ENCODE measurements at regions of chr6 and their contacts with region 1.

Region 1: DNA sequence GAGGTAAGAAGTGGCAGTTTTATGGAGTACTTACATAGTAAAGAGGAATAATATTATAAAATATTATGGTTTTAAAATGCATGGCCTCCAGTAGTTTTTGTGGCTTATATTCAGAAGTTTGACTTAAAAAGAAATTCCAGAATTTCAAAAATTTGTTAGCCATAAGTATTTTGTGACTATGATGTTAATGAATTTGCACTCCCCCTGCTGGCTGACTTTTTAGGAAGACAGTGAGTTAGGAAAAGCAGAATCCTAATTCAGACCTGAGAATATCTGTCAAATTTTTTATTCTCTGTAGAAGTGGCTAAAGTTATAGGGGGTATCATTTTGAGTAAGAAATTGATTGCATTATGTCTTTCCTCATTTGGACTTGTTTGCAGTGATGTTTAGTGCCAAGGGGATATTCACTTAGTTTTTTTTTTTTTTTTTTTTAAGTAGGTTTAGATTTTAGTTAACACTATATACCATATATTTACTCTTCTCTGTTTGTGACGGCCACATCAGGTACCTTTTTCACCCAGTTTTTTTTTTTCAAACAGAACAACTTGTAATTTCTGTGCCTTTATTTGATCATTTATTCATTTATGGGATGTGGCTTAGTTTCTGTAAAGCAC is 40.8 kb downstream of the ZFAND3 start:
- DNase-seq: no peak
- H3K4me3 Mint-ChIP-seq: no peak overlapping the region
- H3K27ac Mint-ChIP-seq: no peak overlapping the region
- H3K4me1 Mint-ChIP-seq: peaks cover 73% of the 10 kb centered on the region
- H3K27me3 Mint-ChIP-seq: no peaks in the 10 kb centered on the region

Region 2: DNA sequence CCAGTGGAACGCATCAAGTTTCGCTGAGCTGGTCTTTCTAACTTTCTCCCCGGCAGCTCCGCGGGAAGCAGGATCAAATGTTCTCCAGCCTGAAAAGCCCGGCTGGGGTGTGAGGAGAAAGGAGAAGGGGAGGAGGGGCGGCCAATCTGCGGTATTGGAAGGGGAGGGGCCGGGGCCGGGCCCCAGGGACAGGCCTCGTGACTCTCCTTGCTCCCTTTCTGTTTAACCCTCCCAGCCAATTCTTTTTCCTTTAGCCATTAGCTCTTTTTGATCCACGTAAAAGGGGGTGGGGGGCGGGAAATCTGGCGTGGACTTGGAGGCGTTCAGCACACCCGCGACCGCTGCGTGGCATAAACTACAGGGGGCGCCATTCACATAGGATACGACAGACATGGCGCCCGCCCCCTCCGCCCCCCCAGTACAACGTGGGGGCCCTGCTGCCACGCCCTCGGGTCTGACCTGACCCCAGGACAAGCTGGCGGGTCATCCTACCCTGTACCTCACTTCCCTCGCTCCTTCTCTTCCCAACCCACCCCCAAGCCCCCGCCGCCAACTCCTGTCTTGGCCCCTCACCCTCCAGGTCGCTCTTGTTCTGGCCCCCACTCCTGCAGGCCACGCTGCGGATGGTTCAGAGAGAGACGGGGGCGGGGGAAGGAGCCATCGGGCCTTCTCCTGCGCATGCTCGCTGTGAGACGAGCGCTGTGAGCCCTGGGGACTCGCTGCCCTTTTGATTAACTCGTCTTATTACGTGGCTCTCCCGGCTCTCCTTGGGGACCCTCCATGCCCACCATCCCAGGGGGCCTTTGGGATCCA is 154.9 kb before region 1 on chr6:
- CTCF ChIA-PET with region 1: no interaction called
- POLR2A ChIA-PET with region 1: no interaction called
- intact Hi-C with region 1: loop called (anchors 10 kb)
- DNase-seq: peak; percentile 83
- H3K4me3 Mint-ChIP-seq: peak overlapping the region; percentile 66
- H3K27ac Mint-ChIP-seq: peak overlapping the region; percentile 60
- H3K4me1 Mint-ChIP-seq: peaks cover 9% of the 10 kb centered on the region
- H3K27me3 Mint-ChIP-seq: no peaks in the 10 kb centered on the region

Region 3: DNA sequence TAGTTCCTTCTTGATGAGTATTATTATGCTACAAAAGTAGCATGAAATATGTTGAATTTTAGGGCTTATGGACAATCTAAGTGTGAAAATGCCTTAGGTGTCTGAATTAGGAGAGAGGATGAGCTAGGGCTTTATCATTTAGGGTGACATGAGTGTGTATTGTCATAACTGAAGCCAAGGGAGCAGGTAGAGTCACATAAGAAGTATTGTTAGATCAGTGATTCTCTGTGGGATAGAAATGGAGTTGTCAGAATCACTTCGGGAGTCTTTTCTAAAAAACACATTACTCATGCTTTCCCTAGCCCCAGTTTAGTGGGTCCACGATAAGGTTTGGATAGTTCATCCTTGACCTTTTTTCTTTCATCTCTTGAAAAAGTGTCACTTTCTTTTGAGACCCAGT is 24.4 kb before region 1 on chr6:
- CTCF ChIA-PET with region 1: no interaction called
- POLR2A ChIA-PET with region 1: no interaction called
- intact Hi-C with region 1: loop called (anchors 2 kb)
- DNase-seq: no peak
- H3K4me3 Mint-ChIP-seq: no peak overlapping the region
- H3K27ac Mint-ChIP-seq: peak overlapping the region; percentile 61
- H3K4me1 Mint-ChIP-seq: peaks cover 41% of the 10 kb centered on the region
- H3K27me3 Mint-ChIP-seq: no peaks in the 10 kb centered on the region

Region 4: DNA sequence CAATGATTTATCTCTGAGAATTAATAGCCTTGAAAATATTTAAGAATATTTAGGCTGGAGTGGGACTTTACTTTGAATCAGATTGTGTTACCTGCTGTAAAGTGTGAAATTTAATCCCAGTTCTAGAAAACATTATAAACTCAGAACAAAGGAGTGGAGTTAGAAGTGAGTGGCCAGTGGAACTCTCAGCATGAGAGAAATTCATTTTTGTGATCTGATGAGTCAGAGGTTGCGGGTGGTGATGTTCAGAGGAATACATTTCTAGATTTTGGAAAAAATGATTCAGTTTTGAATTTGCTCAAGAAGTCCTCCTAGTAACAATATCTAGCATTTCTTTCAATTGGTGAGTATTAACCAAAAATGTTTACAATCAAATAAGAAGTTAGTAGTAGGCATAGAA is 126.7 kb after region 1 on chr6:
- CTCF ChIA-PET with region 1: no interaction called
- POLR2A ChIA-PET with region 1: no interaction called
- intact Hi-C with region 1: loop called (anchors 5 kb)
- DNase-seq: peak; percentile 49
- H3K4me3 Mint-ChIP-seq: no peak overlapping the region
- H3K27ac Mint-ChIP-seq: peak overlapping the region; percentile 60
- H3K4me1 Mint-ChIP-seq: peaks cover 57% of the 10 kb centered on the region
- H3K27me3 Mint-ChIP-seq: no peaks in the 10 kb centered on the region

Region 5: DNA sequence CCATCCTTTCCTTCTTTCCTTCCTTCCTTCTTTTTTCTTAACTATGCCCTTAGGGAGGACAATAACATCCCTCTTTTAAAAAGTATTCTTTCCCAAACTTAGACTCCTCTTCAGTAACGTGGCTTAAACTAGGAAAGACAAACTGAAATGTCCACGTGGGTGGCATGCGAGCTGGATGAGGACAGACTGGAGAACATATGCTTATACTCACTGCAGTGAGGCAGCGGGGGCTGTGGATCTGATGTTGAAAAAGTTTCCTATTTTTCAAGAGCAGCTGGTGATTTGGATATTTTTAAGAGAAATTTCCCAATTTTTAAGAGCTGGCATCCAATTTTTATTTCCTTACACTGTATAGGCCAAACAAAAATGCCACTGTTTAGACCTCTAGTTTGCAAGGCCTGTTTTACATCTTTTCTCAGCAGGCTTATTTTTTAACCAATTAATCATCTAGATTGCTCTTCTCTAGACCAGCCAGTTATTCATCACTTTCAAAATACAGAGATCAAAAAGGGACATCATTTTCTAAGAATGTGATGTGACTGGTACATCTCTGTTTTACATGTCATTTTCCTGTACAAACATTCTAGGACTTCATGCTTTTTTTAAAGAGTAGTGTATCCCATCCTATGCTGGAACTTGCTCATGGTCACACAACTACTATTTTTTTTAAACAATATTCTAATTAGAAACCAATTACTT is 552.9 kb after region 1 on chr6:
- CTCF ChIA-PET with region 1: no interaction called
- POLR2A ChIA-PET with region 1: no interaction called
- intact Hi-C with region 1: loop called (anchors 5 kb)
- DNase-seq: peak; percentile 16
- H3K4me3 Mint-ChIP-seq: peak overlapping the region; percentile 33
- H3K27ac Mint-ChIP-seq: peak overlapping the region; percentile 79
- H3K4me1 Mint-ChIP-seq: peaks cover 24% of the 10 kb centered on the region
- H3K27me3 Mint-ChIP-seq: no peaks in the 10 kb centered on the region